Naive thymus-derived CD4-positive, alpha-beta T cell (primary cell): ENCODE measurements at regions of chr5 and their contacts with region 1.

Region 1: DNA sequence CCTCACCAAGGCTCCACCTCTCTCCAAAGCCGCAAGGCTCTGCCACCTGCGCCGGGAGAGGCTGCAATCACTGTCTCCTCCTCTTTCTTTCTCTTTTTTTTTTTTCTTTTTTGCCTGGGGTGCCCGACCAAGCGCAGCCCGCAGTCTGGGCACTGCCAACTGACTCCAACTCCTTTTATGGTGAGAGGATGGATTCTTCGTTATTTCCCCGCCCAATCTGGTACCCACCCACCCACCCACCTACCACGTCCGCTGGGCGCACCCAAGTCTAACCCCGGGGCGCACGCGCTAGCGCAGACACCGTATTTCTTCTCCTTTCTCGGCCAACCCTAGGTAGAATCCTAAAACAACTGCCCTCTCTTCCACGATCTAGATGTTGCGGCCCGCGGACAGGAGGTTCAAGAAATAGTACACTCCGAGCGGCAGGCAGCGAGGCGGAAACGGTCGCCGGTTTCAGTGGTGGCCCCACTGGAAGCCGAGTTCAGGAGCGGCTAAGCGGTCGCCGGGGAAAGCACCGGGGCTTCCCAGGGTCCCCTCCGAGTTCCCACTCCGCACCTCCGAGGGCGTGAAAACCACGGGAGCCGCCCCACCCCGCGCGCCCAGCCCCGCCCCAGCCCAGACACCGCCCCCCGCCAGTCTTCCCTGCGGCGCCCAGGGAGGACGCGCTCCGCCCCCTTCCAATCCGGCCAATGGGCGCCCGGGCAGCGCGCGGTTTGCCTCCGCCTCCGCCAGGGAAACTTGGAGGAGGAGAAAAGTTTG is 381 bp upstream of the PTGER4 start:
- DNase-seq: peak; percentile 82 to 96 (median 87)
- ATAC-seq: peak; percentile 83
- H3K4me3 ChIP-seq: peak overlapping the region; percentile 77
- H3K4me3 Mint-ChIP-seq: peak overlapping the region; percentile 93 to 100 (median 98)
- H3K27ac ChIP-seq: peak overlapping the region; percentile 99
- H3K27ac Mint-ChIP-seq: peak overlapping the region; percentile 87 to 98 (median 96)
- H3K4me1 ChIP-seq: peaks cover 27 to 38% of the 10 kb centered on the region in 2 donors
- H3K4me1 Mint-ChIP-seq: peaks cover 34 to 63% (median 55%) of the 10 kb centered on the region in 7 donors
- H3K27me3 ChIP-seq: no peaks in the 10 kb centered on the region
- H3K27me3 Mint-ChIP-seq: no peaks in the 10 kb centered on the region

Region 2: GRCh38 chr5:39074016-39074886 is 1605.1 kb before region 1 on chr5 and contains the start of gene RICTOR:
- CTCF ChIA-PET with region 1: no interaction called
- POLR2A ChIA-PET with region 1: no interaction called
- intact Hi-C with region 1: loop called (anchors 2 to 5 kb)
- DNase-seq: peak; percentile 83 to 95 (median 88)
- ATAC-seq: peak; percentile 86
- H3K4me3 ChIP-seq: peak within 1 kb of the TSS; percentile 70
- H3K4me3 Mint-ChIP-seq: peak within 1 kb of the TSS; percentile 89 to 99 (median 98)
- H3K27ac ChIP-seq: peak within 1 kb of the TSS; percentile 100
- H3K27ac Mint-ChIP-seq: peak within 1 kb of the TSS; percentile 95 to 99 (median 98)
- H3K4me1 ChIP-seq: peaks cover 12 to 17% of the 10 kb centered on the region in 2 donors
- H3K4me1 Mint-ChIP-seq: peaks cover 23 to 63% (median 51%) of the 10 kb centered on the region in 7 donors
- H3K27me3 ChIP-seq: peaks cover 11 to 12% of the 10 kb centered on the region in 2 donors
- H3K27me3 Mint-ChIP-seq: peaks cover 4 to 29% (median 16%) of the 10 kb centered on the region in 5 donors
- total RNA-seq, gene RICTOR: 56.9 to 96.2 (median 86.5) TPM

Region 3: DNA sequence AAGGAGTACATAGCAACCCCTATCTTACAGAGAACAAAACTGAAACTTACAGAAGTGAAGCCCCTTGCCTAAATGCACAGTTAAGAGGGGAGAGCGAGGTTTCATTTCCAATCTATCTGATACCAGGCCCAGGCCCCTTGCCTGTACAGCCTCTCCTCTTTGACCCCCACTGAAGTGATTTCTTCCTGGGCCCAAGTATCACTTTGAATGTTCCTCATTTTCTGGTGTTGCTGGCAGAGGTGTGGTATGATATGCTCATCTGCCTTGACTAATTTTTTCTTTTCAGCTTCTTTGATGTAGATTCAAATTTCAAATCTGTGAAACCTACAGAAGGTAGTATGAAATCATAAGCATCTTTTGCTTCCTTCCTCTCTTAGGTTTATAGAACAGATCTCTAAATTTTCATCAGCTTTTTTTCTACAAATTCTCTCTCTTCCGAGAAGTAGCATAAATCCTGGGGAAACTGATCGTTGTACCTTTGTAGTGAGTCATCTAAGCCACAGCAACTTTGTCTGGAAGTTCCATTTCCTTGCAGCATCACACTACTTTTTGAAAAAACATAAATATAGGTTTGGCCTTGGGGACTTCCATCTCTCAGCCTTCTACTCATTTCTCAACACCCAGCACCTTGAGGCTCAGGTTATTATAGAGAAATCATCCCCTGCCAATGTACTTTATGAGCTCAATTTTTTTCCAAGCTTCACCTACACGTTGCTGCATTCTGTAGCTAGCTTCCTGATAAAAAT is 402.0 kb before region 1 on chr5:
- CTCF ChIA-PET with region 1: no interaction called
- POLR2A ChIA-PET with region 1: no interaction called
- intact Hi-C with region 1: loop called in 1 of 2 experiments (anchors 2 kb)
- DNase-seq: peak in 2 of 9 donors; percentile 6 to 34
- ATAC-seq: peak; percentile 72
- H3K4me3 ChIP-seq: no peak overlapping the region
- H3K4me3 Mint-ChIP-seq: peak overlapping the region in 9 of 10 donors; percentile 7 to 72 (median 42)
- H3K27ac ChIP-seq: peak overlapping the region; percentile 45
- H3K27ac Mint-ChIP-seq: peak overlapping the region; percentile 66 to 88 (median 76)
- H3K4me1 ChIP-seq: peaks cover 9 to 16% of the 10 kb centered on the region in 2 donors
- H3K4me1 Mint-ChIP-seq: peaks cover 18 to 39% (median 33%) of the 10 kb centered on the region in 7 donors
- H3K27me3 ChIP-seq: no peaks in the 10 kb centered on the region
- H3K27me3 Mint-ChIP-seq: no peaks in the 10 kb centered on the region

Region 4: GRCh38 chr5:40410231-40410861 is 269.0 kb before region 1 on chr5:
- CTCF ChIA-PET with region 1: interaction called, 7 read pairs
- POLR2A ChIA-PET with region 1: interaction called, 37 read pairs
- intact Hi-C with region 1: loop called (anchors 1 kb)
- DNase-seq: peak; percentile 23 to 98 (median 93)
- ATAC-seq: peak; percentile 91
- H3K4me3 ChIP-seq: no peak overlapping the region
- H3K4me3 Mint-ChIP-seq: peak overlapping the region; percentile 49 to 87 (median 80)
- H3K27ac ChIP-seq: peak overlapping the region; percentile 99
- H3K27ac Mint-ChIP-seq: peak overlapping the region; percentile 95 to 100 (median 99)
- H3K4me1 ChIP-seq: peaks cover 54 to 56% of the 10 kb centered on the region in 2 donors
- H3K4me1 Mint-ChIP-seq: peaks cover 38 to 76% (median 65%) of the 10 kb centered on the region in 7 donors
- H3K27me3 ChIP-seq: no peaks in the 10 kb centered on the region
- H3K27me3 Mint-ChIP-seq: no peaks in the 10 kb centered on the region

Region 5: DNA sequence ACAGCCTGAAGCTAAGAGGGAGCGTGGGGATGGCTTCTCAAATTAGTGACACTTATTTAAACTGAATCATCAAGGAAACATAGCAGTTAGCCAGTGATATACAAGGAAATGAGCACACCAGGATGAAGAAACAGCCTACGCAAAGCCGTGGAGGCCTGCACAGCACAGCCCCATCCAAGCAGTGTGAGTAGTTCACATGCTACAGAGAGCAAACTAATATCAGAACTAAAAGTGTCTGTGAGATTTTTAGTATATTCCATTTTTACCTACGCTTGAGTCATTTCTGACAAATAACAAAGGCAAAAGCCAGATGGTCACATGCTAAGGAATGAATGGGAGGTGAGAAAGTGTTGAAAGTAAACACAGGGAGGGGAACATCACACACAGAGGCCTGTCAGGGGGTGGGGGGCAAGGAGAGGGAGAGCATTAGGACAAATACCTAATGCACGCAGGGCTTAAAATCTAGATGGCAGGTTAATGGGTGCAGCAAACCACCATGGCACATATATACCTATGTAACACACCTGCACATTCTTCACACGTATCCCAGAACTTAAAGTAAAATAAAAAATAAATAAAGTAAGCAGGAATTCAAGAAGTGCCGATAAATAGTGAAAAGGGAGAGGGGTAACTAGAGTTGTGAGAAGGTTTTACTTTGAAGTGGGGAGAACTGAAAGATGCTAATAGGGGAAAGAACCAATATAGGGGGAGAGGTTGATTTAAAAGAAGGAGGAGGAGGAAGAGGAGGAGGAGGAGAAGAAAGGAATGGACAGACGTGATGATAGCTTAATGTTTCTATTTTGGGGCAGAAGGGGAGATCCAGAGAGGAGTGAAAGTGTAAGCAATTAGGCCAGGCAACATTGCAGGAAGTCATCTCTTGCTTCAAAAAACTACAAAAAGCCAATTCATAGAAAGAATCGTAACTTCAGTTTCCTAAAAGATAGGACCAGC is 100.6 kb before region 1 on chr5:
- CTCF ChIA-PET with region 1: no interaction called
- POLR2A ChIA-PET with region 1: no interaction called
- intact Hi-C with region 1: loop called (anchors 1 to 2 kb)
- DNase-seq: peak in 4 of 9 donors; percentile 7 to 45 (median 8)
- ATAC-seq: peak; percentile 45
- H3K4me3 ChIP-seq: no peak overlapping the region
- H3K4me3 Mint-ChIP-seq: peak overlapping the region in 9 of 10 donors; percentile 61 to 83 (median 79)
- H3K27ac ChIP-seq: peak overlapping the region; percentile 11
- H3K27ac Mint-ChIP-seq: peak overlapping the region; percentile 6 to 85 (median 73)
- H3K4me1 ChIP-seq: no peaks in the 10 kb centered on the region
- H3K4me1 Mint-ChIP-seq: peaks cover 14 to 35% (median 24%) of the 10 kb centered on the region in 7 donors
- H3K27me3 ChIP-seq: no peaks in the 10 kb centered on the region
- H3K27me3 Mint-ChIP-seq: no peaks in the 10 kb centered on the region

Region 6: DNA sequence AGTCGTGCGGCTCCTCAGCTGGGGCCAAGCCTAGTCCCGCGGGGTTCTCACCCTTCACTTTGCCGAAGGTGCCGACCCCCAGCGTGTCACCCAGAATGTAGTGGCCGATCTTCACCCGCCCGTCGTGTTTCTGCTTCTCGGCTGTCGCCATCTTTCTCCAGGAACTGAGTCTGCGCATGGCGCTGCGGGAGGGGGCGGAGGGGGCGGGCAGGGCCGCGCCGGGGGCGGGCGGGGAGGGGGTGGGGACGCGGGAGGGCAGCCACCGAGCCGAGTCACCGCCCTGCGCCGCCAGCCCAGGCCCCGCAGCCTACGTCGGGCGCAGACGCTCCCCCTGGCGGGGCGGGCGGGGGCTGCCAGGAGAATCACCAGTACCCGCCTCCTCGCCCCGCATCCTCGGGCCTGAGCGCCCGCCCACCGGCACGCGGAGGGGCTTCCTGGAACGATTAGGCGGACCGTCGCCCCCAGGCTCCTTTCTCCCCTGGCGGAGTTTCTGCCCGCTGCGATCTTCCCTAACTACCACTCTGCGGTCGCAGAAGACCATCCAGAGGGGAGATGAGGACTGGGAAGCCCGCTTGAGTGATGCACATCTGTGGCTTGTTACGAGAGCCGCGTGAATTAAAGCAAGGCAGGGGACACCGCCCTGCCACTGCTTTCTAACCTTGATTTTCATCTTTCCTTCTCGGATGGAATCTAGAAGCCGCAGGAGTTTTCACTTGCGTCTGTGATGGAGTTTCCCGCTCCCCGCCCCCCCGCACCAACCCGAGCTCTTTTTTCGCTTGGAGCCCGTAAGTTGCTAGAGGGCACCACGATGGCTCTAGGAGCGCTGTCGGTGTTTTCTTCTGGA is 118.9 kb after region 1 on chr5 and contains the start of gene PRKAA1:
- CTCF ChIA-PET with region 1: no interaction called
- POLR2A ChIA-PET with region 1: no interaction called
- intact Hi-C with region 1: loop called in 1 of 2 experiments (anchors 1 kb)
- DNase-seq: peak; percentile 86 to 92 (median 91)
- ATAC-seq: peak; percentile 98
- H3K4me3 ChIP-seq: peak within 1 kb of the TSS; percentile 98
- H3K4me3 Mint-ChIP-seq: peak within 1 kb of the TSS; percentile 86 to 96 (median 94)
- H3K27ac ChIP-seq: peak within 1 kb of the TSS; percentile 91
- H3K27ac Mint-ChIP-seq: peak within 1 kb of the TSS; percentile 74 to 96 (median 94)
- H3K4me1 ChIP-seq: peaks cover 12 to 16% of the 10 kb centered on the region in 2 donors
- H3K4me1 Mint-ChIP-seq: peaks cover 28 to 55% (median 44%) of the 10 kb centered on the region in 7 donors
- H3K27me3 ChIP-seq: no peaks in the 10 kb centered on the region
- H3K27me3 Mint-ChIP-seq: peaks cover 0 to 17% (median 0%) of the 10 kb centered on the region in 5 donors
- total RNA-seq, gene PRKAA1: 65.5 to 103 (median 98.1) TPM